ENCODE measurements at regions of chrX and their contacts with region 1.

Region 1: DNA sequence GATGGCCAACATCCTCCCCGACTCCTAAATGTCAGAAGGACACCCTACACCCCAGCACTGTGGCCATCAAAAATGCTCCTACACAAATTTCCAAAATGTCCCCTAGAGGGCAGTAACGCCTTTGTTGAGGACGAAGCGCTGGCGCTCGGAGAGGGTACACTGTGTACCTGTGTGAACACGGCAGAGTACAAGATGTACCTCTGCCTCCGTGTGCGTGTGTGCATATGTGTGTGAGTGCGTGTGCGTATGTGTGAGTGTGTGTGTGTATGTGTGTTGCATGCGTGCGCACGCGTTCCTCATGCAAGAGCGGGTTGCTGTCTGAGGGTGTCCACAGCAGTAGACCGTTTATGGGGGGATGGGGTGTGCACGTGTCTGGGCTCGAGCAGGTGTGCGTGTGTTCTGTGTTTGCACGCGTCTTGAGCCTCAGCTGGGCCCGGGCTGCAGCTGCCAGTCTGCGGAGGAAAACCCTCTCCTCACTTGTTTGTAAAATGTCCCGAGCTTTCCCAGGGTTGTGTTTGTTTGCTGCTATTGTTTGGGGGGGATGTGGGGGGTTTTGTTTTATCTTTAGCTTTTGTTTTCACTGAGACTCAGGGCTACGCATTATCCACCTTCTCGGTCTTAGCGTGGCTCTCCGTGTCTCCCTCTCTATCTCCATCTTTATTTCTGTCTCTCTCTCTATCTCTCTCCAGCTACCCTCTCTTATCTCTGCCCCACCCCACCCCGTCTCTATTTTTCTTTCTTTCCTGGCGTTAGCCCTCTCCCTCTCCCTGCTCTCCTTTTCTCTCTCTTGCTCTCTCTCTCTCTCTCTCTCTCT is 10.4 kb upstream of the TSPYL2 start:
- DNase-seq: peak; percentile 49 to 87 (median 65)
- ATAC-seq: peak; percentile 89 to 90 (median 90)
- H3K4me3 ChIP-seq: peak overlapping the region; percentile 20 to 57
- H3K4me3 Mint-ChIP-seq: peak overlapping the region; percentile 71 to 85 (median 82)
- H3K27ac ChIP-seq: peak overlapping the region; percentile 41
- H3K27ac Mint-ChIP-seq: peak overlapping the region; percentile 46 to 84
- H3K4me1 ChIP-seq: peaks cover 0 to 9% of the 10 kb centered on the region in 2 experiments
- H3K4me1 Mint-ChIP-seq: peaks cover 16 to 20% (median 18%) of the 10 kb centered on the region in 3 donors
- H3K27me3 ChIP-seq: no peaks in the 10 kb centered on the region
- H3K27me3 Mint-ChIP-seq: peaks cover 0 to 3% of the 10 kb centered on the region in 2 donors

Region 2: GRCh38 chrX:52280812-52281211 is 791.0 kb before region 1 on chrX:
- CTCF ChIA-PET with region 1: no interaction called
- POLR2A ChIA-PET with region 1: no interaction called
- DNase-seq: no peak
- ATAC-seq: no peak
- H3K4me3 ChIP-seq: no peak overlapping the region
- H3K4me3 Mint-ChIP-seq: no peak overlapping the region
- H3K27ac ChIP-seq: no peak overlapping the region
- H3K27ac Mint-ChIP-seq: no peak overlapping the region
- H3K4me1 ChIP-seq: no peaks in the 10 kb centered on the region
- H3K4me1 Mint-ChIP-seq: no peaks in the 10 kb centered on the region
- H3K27me3 ChIP-seq: peaks cover 0 to 10% of the 10 kb centered on the region in 2 experiments
- H3K27me3 Mint-ChIP-seq: peaks cover 2 to 40% of the 10 kb centered on the region in 2 donors

Region 3: DNA sequence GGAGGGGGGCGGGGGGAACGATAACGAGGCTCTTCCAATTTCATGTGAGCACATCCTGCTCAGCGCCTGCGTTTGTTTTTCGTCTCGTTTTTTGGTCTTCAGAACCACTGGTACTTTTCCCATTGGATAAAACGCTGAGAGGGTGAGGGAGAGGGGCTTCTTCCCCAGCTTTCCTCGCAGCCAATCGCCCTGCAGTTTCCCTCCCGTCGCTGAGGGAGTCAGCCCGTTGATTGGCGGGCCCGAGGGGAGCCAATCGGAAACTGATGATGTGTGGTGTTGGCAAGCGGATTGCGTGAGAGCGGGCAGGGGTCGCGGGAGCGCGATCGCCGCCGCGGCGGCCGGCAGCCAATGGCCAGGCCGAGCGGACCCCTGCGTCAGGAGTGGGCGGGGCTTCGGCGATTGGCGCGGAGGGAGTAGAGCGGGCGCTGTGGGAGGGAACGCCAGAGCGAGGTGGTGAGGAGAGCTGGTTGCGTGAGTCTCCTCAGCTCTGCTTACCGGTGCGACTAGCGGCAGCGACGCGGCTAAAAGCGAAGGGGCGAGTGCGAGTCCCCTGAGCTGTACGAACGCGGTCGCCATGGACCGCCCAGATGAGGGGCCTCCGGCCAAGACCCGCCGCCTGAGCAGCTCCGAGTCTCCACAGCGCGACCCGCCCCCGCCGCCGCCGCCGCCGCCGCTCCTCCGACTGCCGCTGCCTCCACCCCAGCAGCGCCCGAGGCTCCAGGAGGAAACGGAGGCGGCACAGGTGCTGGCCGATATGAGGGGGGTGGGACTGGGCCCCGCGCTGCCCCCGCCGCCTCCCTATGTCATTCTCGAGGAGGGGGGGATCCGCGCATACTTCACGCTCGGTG is 10.3 kb after region 1 on chrX and contains the start of gene TSPYL2:
- CTCF ChIA-PET with region 1: interaction called in 1 of 2 experiments, 6 read pairs
- POLR2A ChIA-PET with region 1: interaction called, 4 to 21 read pairs
- DNase-seq: peak; percentile 81 to 97 (median 93)
- ATAC-seq: peak; percentile 85 to 91 (median 89)
- H3K4me3 ChIP-seq: peak within 1 kb of the TSS; percentile 60 to 79
- H3K4me3 Mint-ChIP-seq: peak within 1 kb of the TSS; percentile 84 to 90 (median 89)
- H3K27ac ChIP-seq: peak within 1 kb of the TSS; percentile 87
- H3K27ac Mint-ChIP-seq: peak within 1 kb of the TSS; percentile 97
- H3K4me1 ChIP-seq: peaks cover 0 to 25% of the 10 kb centered on the region in 2 experiments
- H3K4me1 Mint-ChIP-seq: peaks cover 39 to 55% (median 45%) of the 10 kb centered on the region in 3 donors
- H3K27me3 ChIP-seq: no peaks in the 10 kb centered on the region
- H3K27me3 Mint-ChIP-seq: peaks cover 0 to 18% of the 10 kb centered on the region in 2 donors
- total RNA-seq, gene TSPYL2: 126 to 253 (median 141) TPM